ENCODE measurements at regions of chr5 and their contacts with region 1.

Region 1: DNA sequence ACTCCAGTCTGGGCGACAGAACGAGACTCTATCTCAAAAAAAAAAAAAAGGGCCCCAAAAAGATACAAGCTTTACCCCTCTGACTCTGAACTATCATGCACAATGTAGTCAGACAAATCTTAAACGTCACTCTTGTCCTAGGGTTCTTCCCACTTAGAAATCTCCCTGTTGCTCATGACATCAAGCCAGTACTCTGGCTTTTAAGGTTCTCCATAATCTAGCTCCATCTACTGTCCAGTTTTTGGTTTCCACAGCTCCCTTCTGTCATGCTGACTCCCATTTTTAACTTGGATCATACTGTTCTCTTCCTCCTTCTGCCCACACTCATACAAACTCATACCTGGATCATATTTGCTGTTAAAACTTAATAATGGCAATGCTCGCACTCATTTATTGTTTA is 156.7 kb upstream of the TLX3 start:
- DNase-seq: peak in 1 of 2 experiments; percentile 38
- H3K4me3 ChIP-seq: no peak overlapping the region
- H3K4me3 Mint-ChIP-seq: no peak overlapping the region
- H3K27ac Mint-ChIP-seq: no peak overlapping the region
- H3K4me1 ChIP-seq: no peaks in the 10 kb centered on the region
- H3K4me1 Mint-ChIP-seq: no peaks in the 10 kb centered on the region
- H3K27me3 ChIP-seq: no peaks in the 10 kb centered on the region
- H3K27me3 Mint-ChIP-seq: no peaks in the 10 kb centered on the region
- CTCF ChIP-seq: peak; percentile 36 to 46

Region 2: GRCh38 chr5:170986598-170986997 is 165.8 kb before region 1 on chr5:
- CTCF ChIA-PET with region 1: no interaction called
- POLR2A ChIA-PET with region 1: no interaction called
- intact Hi-C with region 1: loop called (anchors 5 kb)
- DNase-seq: no peak
- H3K4me3 ChIP-seq: no peak overlapping the region
- H3K4me3 Mint-ChIP-seq: no peak overlapping the region
- H3K27ac Mint-ChIP-seq: no peak overlapping the region
- H3K4me1 ChIP-seq: no peaks in the 10 kb centered on the region
- H3K4me1 Mint-ChIP-seq: no peaks in the 10 kb centered on the region
- H3K27me3 ChIP-seq: no peaks in the 10 kb centered on the region
- H3K27me3 Mint-ChIP-seq: no peaks in the 10 kb centered on the region
- CTCF ChIP-seq: no peak

Region 3: GRCh38 chr5:171207256-171207847 is 55.0 kb after region 1 on chr5:
- CTCF ChIA-PET with region 1: no interaction called
- POLR2A ChIA-PET with region 1: no interaction called
- intact Hi-C with region 1: no loop called
- DNase-seq: peak in 1 of 2 experiments; percentile 62
- H3K4me3 ChIP-seq: no peak overlapping the region
- H3K4me3 Mint-ChIP-seq: no peak overlapping the region
- H3K27ac Mint-ChIP-seq: no peak overlapping the region
- H3K4me1 ChIP-seq: no peaks in the 10 kb centered on the region
- H3K4me1 Mint-ChIP-seq: no peaks in the 10 kb centered on the region
- H3K27me3 ChIP-seq: no peaks in the 10 kb centered on the region
- H3K27me3 Mint-ChIP-seq: no peaks in the 10 kb centered on the region
- CTCF ChIP-seq: peak; percentile 52 to 64

Measured in Caco-2 (cell line).